Esophagus muscularis mucosa (tissue), 4 donors: ENCODE measurements at regions of chr6 and their contacts with region 1.

Region 1: DNA sequence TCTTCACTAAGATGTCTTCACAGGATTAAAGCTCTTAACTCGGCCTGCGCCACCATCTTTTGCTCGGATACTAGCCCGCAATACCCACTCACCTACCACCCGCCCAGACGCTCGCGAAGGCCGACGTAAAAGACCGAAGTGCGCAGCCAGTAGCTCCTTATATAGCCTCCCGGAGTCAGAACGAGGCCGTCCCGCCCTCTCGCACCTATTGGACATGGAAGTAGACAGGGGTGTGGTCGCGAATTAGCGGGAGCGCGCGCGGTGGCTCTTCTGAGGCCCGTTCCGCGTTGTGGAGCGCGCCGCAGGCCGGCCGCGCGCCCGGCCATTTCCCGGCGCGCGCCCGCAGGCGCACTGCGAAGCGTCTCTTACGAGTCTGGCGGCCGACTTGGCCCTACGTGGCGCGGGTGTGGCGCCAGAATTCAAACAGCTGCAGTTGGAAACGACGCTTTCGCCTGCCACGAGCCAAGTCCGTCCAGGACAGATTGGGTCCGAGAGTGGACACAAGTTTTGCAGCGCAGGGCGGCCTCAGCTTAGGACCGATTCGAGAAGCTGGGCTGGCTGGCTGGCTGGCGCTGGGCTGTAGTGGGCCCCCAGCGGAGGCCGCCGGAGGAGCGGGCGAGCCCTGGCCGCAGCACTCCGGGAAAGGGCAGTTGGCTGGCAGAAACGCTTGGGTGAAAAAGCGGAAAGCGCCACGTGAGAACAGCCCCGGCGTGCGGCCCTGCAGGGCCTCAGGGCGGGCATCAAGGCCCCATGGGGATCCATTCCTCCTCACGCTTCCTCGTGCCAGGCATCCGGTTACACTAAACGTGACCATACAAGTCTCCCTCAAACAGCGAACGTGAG is 36.1 kb upstream of the SYNCRIP start:
- DNase-seq: peak; percentile 100
- H3K4me3 ChIP-seq: peak overlapping the region; percentile 75 to 85 (median 78)
- H3K27ac ChIP-seq: peak overlapping the region; percentile 90 to 92 (median 91)
- H3K4me1 ChIP-seq: peaks cover 21 to 43% (median 38%) of the 10 kb centered on the region in 4 donors
- H3K27me3 ChIP-seq: no peaks in the 10 kb centered on the region
- CTCF ChIP-seq: peak in 1 of 3 experiments; percentile 14
- EP300 ChIP-seq: no peak
- POLR2A ChIP-seq: peak; percentile 99

Region 2: DNA sequence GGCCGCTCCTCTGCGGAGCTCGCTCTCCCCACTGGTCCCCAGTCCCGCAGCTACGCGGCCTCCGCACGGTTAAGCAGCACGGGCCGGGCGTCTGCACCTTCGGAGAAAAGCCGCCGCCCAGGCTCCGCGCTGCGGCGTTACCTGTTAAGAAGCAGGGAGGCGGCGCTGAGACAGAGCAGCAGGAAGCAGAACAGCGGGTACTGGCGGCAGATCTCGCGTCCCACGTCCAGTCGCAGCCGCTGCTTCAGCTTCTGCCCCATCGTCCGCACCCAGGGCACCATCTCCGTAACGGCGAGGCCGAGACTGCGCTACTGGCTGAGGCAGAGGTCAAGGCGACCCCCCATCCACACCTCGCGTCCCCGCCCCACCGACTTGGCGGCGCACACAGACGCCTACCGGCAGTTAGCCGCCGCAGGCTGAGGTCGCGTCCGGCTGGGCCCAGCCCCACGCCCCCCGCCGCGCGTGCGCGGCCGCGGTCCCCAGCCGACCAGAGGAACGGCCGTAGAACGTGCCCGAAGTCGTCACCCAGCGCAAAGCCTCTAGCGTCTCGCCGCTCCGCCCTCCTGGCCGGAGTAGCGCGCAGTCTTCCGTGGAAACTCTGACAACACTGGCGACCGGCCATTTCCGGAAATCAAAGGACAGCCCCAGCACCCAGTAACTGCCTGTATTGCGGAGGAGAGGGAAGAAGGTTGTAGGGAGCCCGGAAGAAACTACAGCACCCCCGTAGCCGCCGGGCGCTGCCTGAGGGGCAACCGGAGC is 85.2 kb before region 1 on chr6 and contains the start of gene SNX14:
- intact Hi-C with region 1: loop called (anchors 2 kb)
- DNase-seq: peak; percentile 96
- H3K4me3 ChIP-seq: peak within 1 kb of the TSS; percentile 76 to 81 (median 79)
- H3K27ac ChIP-seq: peak within 1 kb of the TSS; percentile 89 to 96 (median 95)
- H3K4me1 ChIP-seq: peaks cover 20 to 38% (median 28%) of the 10 kb centered on the region in 4 donors
- H3K27me3 ChIP-seq: no peaks in the 10 kb centered on the region
- CTCF ChIP-seq: peak in 1 of 3 experiments; percentile 14
- EP300 ChIP-seq: no peak
- POLR2A ChIP-seq: peak; percentile 63
- total RNA-seq, gene SNX14: 39.6 to 60.6 (median 41.5) TPM

Region 3: GRCh38 chr6:85824326-85824725 is 145.5 kb after region 1 on chr6:
- intact Hi-C with region 1: no loop called
- DNase-seq: no peak
- H3K4me3 ChIP-seq: no peak overlapping the region
- H3K27ac ChIP-seq: no peak overlapping the region
- H3K4me1 ChIP-seq: no peaks in the 10 kb centered on the region
- H3K27me3 ChIP-seq: no peaks in the 10 kb centered on the region
- CTCF ChIP-seq: no peak
- EP300 ChIP-seq: no peak
- POLR2A ChIP-seq: no peak